ENCODE measurements at regions of chr16 and their contacts with region 1.

Region 1: GRCh38 chr16:78778101-78779004 is 678.9 kb downstream of the WWOX start:
- DNase-seq: peak; percentile 90
- H3K4me3 Mint-ChIP-seq: peak overlapping the region; percentile 62
- H3K27ac Mint-ChIP-seq: peak overlapping the region; percentile 96
- H3K4me1 Mint-ChIP-seq: peaks cover 94% of the 10 kb centered on the region
- H3K27me3 Mint-ChIP-seq: no peaks in the 10 kb centered on the region

Region 2: GRCh38 chr16:78122774-78123315 is 655.5 kb before region 1 on chr16:
- CTCF ChIA-PET with region 1: no interaction called
- POLR2A ChIA-PET with region 1: no interaction called
- intact Hi-C with region 1: loop called (anchors 5 kb)
- DNase-seq: peak; percentile 28
- H3K4me3 Mint-ChIP-seq: peak overlapping the region; percentile 31
- H3K27ac Mint-ChIP-seq: no peak overlapping the region
- H3K4me1 Mint-ChIP-seq: peaks cover 7% of the 10 kb centered on the region
- H3K27me3 Mint-ChIP-seq: no peaks in the 10 kb centered on the region

Region 3: DNA sequence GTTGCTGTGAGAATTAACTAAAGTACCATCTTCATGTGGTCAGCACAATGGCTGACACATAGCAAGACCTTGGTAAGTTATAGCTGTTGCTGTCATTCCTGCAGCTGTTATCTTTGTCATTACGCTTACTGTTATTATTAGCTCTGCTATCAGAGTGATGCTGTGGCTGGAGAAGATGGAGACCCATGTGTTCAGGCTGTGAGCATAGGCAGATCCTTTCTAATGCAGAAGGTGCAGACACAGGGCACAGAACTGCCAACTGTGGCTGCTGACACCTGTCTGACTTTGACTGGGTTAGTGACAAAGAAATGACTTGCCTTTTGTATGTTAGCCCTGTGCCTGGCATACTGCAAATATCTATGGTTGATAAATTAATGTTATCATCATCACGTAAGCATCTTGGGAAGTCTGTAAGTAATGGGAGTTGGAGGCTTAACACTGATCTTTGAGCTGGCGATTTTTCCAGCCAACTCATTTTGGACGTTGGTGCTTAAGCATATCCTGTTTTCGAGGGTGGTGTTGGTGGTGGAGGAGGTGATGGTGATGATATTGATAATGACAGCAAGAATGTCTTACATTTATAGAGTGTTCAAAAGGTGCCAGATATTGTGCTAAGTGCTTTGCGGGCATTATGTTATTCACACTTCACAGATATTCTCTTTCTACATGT is 16.4 kb after region 1 on chr16:
- CTCF ChIA-PET with region 1: interaction called, 5 read pairs
- POLR2A ChIA-PET with region 1: interaction called, 84 read pairs
- intact Hi-C with region 1: loop called (anchors 1 kb)
- DNase-seq: peak; percentile 58
- H3K4me3 Mint-ChIP-seq: no peak overlapping the region
- H3K27ac Mint-ChIP-seq: peak overlapping the region; percentile 87
- H3K4me1 Mint-ChIP-seq: peaks cover 55% of the 10 kb centered on the region
- H3K27me3 Mint-ChIP-seq: no peaks in the 10 kb centered on the region

Region 4: DNA sequence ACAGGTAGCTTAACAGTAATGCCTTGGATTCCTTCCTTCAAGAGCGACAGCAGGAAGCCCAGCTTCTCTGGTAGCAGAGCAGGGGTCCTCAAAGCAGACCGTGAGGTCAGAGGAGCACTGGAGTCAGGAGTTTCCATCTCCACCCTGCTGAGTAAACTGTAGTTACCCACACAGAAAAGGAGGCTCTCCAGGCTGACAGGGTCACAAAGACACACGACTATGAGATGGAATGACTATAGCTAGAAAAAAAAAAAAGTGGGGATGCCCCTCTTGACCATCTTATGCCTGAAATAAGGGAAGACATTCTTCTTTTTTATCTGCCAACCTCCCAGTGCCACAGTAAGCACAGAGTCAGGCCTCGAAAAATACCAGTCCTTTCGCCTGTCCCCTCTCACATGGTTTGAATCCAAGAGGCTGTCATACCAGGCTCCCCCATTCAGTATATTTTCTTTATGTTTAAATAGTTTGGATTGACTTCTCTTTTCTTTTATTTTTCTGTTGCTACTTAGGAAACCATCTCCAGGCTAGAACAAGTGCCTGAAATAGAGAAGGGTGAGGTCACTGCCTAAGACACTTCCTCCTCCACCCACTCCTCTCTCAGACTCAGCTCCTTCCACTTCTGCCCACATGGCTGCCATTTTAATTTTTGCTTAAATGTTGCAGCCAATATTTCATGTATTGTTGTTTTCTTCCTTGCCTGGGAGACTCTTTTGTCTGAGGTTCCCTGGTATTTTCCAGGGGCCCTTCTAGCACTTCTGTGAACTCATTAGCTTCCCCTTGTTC is 114.8 kb after region 1 on chr16:
- CTCF ChIA-PET with region 1: interaction called, 12 read pairs
- POLR2A ChIA-PET with region 1: interaction called, 232 read pairs
- intact Hi-C with region 1: loop called (anchors 1 kb)
- DNase-seq: peak; percentile 65
- H3K4me3 Mint-ChIP-seq: peak overlapping the region; percentile 20
- H3K27ac Mint-ChIP-seq: peak overlapping the region; percentile 96
- H3K4me1 Mint-ChIP-seq: peaks cover 86% of the 10 kb centered on the region
- H3K27me3 Mint-ChIP-seq: no peaks in the 10 kb centered on the region

Region 5: GRCh38 chr16:78962457-78962929 is 184.1 kb after region 1 on chr16:
- CTCF ChIA-PET with region 1: interaction called, 9 read pairs
- POLR2A ChIA-PET with region 1: interaction called, 30 read pairs
- intact Hi-C with region 1: loop called (anchors 1 kb)
- DNase-seq: peak; percentile 52
- H3K4me3 Mint-ChIP-seq: peak overlapping the region; percentile 3
- H3K27ac Mint-ChIP-seq: peak overlapping the region; percentile 92
- H3K4me1 Mint-ChIP-seq: peaks cover 59% of the 10 kb centered on the region
- H3K27me3 Mint-ChIP-seq: no peaks in the 10 kb centered on the region

Region 6: DNA sequence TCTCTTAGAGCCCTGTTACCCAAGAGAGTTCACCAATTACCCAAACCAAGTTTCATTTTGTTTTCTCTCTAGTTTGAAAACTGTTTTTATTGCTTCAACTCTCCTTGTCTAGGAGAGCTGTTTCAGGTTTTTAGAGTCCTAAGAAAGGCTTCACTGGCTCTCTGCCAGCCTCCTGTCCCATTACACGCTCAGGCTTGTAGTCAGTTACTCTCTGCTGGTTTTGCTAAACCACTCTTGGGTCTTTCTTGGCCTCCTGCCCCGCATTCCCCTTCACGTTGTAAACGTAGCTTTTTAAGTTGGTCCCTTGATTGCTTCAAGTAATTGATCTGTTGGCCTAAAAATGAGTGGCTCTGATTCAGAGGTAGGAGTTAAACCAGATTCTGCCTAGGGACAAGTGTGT is 293.1 kb after region 1 on chr16:
- CTCF ChIA-PET with region 1: interaction called, 4 read pairs
- POLR2A ChIA-PET with region 1: interaction called, 33 read pairs
- intact Hi-C with region 1: loop called (anchors 1 kb)
- DNase-seq: no peak
- H3K4me3 Mint-ChIP-seq: no peak overlapping the region
- H3K27ac Mint-ChIP-seq: peak overlapping the region; percentile 84
- H3K4me1 Mint-ChIP-seq: peaks cover 74% of the 10 kb centered on the region
- H3K27me3 Mint-ChIP-seq: peaks cover 4% of the 10 kb centered on the region

Region 7: GRCh38 chr16:79758615-79759341 is 980.4 kb after region 1 on chr16:
- CTCF ChIA-PET with region 1: no interaction called
- POLR2A ChIA-PET with region 1: no interaction called
- intact Hi-C with region 1: loop called (anchors 1 kb)
- DNase-seq: no peak
- H3K4me3 Mint-ChIP-seq: no peak overlapping the region
- H3K27ac Mint-ChIP-seq: no peak overlapping the region
- H3K4me1 Mint-ChIP-seq: peaks cover 37% of the 10 kb centered on the region
- H3K27me3 Mint-ChIP-seq: peaks cover 4% of the 10 kb centered on the region